Caco-2 (cell line): ENCODE measurements at regions of chr18 and their contacts with region 1.

Region 1: DNA sequence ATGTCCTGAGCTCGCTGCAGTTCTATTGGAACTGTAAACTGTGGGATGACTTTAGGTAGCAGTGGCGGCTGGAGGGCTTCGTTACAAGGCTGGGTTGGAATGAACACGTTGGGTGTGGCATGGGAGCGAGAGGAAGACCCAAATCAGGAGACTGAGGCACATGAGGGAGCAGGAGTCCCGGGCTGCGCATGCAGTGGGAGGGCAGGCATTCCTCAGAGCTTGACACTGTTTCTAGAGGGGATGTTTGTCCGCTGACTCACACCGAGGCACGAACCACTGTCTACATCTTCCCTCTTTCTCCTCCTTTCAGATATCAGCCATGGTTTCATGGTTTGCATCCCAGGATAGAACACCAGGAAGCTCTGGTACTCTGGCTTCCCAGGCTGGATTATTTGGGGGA is 40.6 kb upstream of the LAMA1 start:
- DNase-seq: peak; percentile 78 to 87
- H3K4me3 ChIP-seq: peak overlapping the region; percentile 18; the same call in 1 of the 2 replicates
- H3K4me3 Mint-ChIP-seq: peak overlapping the region; percentile 67
- H3K27ac Mint-ChIP-seq: peak overlapping the region; percentile 77
- H3K4me1 ChIP-seq: peaks cover 60% of the 10 kb centered on the region
- H3K4me1 Mint-ChIP-seq: peaks cover 41% of the 10 kb centered on the region
- H3K27me3 ChIP-seq: no peaks in the 10 kb centered on the region
- H3K27me3 Mint-ChIP-seq: no peaks in the 10 kb centered on the region
- CTCF ChIP-seq: no peak

Region 2: DNA sequence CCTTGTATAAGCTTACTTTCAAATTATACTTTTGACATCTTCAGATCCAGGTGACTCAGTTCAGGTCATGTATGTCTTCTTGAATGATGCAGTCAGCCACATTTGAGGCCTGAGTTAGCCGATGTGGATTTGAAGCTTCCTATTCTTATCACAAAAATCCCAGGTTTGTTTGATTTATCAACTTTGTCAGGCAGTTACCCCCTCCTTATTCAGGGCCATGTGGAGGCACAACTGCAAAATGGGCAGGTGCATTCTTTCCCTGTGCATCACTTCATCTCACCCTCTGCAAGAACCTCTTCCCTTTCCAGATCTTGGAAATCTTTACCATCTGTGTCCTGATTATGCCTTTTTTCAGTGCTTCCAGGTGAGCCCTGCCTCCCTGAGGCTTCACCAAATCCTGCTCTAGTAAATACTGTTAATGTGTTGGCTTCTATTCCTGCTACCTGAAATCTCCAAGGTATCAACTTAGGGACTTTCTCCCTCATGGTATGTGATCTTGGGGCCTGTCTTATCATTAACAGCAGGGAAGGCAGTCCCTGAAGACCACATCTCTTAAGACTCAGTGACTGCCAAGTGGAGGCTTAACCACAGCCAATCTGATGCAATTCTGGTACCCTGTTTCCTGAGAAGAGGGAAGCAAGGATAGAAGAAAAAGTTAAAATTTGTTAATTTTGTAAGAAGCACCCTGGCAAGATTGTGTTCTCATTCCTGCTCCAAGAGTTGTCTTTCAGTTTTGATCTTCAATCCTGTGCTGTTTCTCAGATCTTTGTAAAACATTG is 438.1 kb before region 1 on chr18:
- CTCF ChIA-PET with region 1: no interaction called
- POLR2A ChIA-PET with region 1: no interaction called
- intact Hi-C with region 1: loop called (anchors 5 kb)
- DNase-seq: peak; percentile 56 to 57
- H3K4me3 ChIP-seq: no peak overlapping the region
- H3K4me3 Mint-ChIP-seq: peak overlapping the region; percentile 60
- H3K27ac Mint-ChIP-seq: peak overlapping the region; percentile 99
- H3K4me1 ChIP-seq: peaks cover 96% of the 10 kb centered on the region
- H3K4me1 Mint-ChIP-seq: peaks cover 65% of the 10 kb centered on the region
- H3K27me3 ChIP-seq: no peaks in the 10 kb centered on the region
- H3K27me3 Mint-ChIP-seq: no peaks in the 10 kb centered on the region
- CTCF ChIP-seq: no peak

Region 3: GRCh38 chr18:7038330-7038851 is 119.8 kb before region 1 on chr18:
- CTCF ChIA-PET with region 1: interaction called, 15 read pairs
- POLR2A ChIA-PET with region 1: no interaction called
- intact Hi-C with region 1: loop called (anchors 1 kb)
- DNase-seq: peak; percentile 93 to 94
- H3K4me3 ChIP-seq: peak overlapping the region; percentile 31
- H3K4me3 Mint-ChIP-seq: peak overlapping the region; percentile 55
- H3K27ac Mint-ChIP-seq: peak overlapping the region; percentile 85
- H3K4me1 ChIP-seq: peaks cover 53% of the 10 kb centered on the region
- H3K4me1 Mint-ChIP-seq: peaks cover 35% of the 10 kb centered on the region
- H3K27me3 ChIP-seq: no peaks in the 10 kb centered on the region
- H3K27me3 Mint-ChIP-seq: no peaks in the 10 kb centered on the region
- CTCF ChIP-seq: peak; percentile 82 to 89

Region 4: GRCh38 chr18:7059276-7059675 is 98.9 kb before region 1 on chr18:
- CTCF ChIA-PET with region 1: interaction called, 8 read pairs
- POLR2A ChIA-PET with region 1: interaction called, 8 read pairs
- intact Hi-C with region 1: loop called (anchors 1 kb)
- DNase-seq: peak in 1 of 2 experiments; percentile 56
- H3K4me3 ChIP-seq: no peak overlapping the region
- H3K4me3 Mint-ChIP-seq: peak overlapping the region; percentile 38
- H3K27ac Mint-ChIP-seq: peak overlapping the region; percentile 73
- H3K4me1 ChIP-seq: peaks cover 63% of the 10 kb centered on the region
- H3K4me1 Mint-ChIP-seq: peaks cover 44% of the 10 kb centered on the region
- H3K27me3 ChIP-seq: no peaks in the 10 kb centered on the region
- H3K27me3 Mint-ChIP-seq: no peaks in the 10 kb centered on the region
- CTCF ChIP-seq: no peak

Region 5: DNA sequence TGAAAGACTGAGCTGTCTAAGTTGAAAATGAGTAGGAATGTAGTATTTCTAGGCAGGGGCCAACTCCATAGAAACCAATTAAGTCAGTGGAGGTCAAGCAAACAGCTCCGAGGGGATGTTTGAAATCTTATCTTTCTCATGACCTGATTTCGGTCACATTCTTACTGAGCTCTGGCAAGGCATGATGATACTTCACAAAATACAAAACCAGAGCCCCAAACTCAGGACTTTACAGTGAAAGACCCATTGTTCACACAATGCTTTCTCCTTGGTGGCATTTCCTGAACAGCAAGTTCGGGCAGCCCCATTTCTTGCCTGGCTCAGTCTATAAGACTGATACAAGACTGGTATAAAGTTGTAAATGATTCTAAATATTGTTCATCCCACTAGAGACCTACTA is 93.9 kb before region 1 on chr18:
- CTCF ChIA-PET with region 1: interaction called, 8 read pairs
- POLR2A ChIA-PET with region 1: interaction called, 8 read pairs
- intact Hi-C with region 1: loop called (anchors 1 kb)
- DNase-seq: peak; percentile 58 to 72
- H3K4me3 ChIP-seq: no peak overlapping the region
- H3K4me3 Mint-ChIP-seq: peak overlapping the region; percentile 1
- H3K27ac Mint-ChIP-seq: peak overlapping the region; percentile 40
- H3K4me1 ChIP-seq: peaks cover 92% of the 10 kb centered on the region
- H3K4me1 Mint-ChIP-seq: peaks cover 55% of the 10 kb centered on the region
- H3K27me3 ChIP-seq: no peaks in the 10 kb centered on the region
- H3K27me3 Mint-ChIP-seq: no peaks in the 10 kb centered on the region
- CTCF ChIP-seq: no peak

Region 6: DNA sequence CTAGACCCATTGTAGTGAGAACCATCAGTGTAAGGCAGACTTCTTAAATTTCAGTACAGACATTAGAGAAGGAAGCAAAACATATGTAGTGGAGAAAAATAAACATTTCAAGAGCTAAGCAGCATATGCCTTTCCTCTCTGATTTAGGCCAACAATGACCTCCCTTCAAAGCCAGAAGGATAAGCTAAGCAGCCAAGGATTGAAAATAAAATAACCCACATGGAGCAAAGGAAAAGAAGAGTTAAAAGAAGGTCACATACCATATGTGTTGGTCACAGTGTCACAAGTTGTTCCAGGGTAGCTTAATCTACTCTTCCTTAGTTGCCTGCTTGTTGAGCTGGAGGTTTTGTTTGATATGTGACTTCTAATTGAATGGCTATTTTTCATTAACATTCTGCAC is 25.0 kb before region 1 on chr18:
- CTCF ChIA-PET with region 1: interaction called, 18 read pairs
- POLR2A ChIA-PET with region 1: interaction called, 15 read pairs
- intact Hi-C with region 1: loop called (anchors 1 kb)
- DNase-seq: peak in 1 of 2 experiments; percentile 68
- H3K4me3 ChIP-seq: no peak overlapping the region
- H3K4me3 Mint-ChIP-seq: peak overlapping the region; percentile 67
- H3K27ac Mint-ChIP-seq: peak overlapping the region; percentile 72
- H3K4me1 ChIP-seq: peaks cover 50% of the 10 kb centered on the region
- H3K4me1 Mint-ChIP-seq: peaks cover 44% of the 10 kb centered on the region
- H3K27me3 ChIP-seq: no peaks in the 10 kb centered on the region
- H3K27me3 Mint-ChIP-seq: no peaks in the 10 kb centered on the region
- CTCF ChIP-seq: no peak